Activated CD4-positive, alpha-beta T cell treated with anti-CD3 and anti-CD28 coated beads for 36 hours (primary cell): ENCODE measurements at regions of chr5 and their contacts with region 1.

Region 1: GRCh38 chr5:111278845-111279504 is 54.8 kb downstream of the CAMK4 start:
- DNase-seq: peak; percentile 93
- ATAC-seq: peak; percentile 97
- H3K4me3 Mint-ChIP-seq: no peak overlapping the region
- H3K27ac Mint-ChIP-seq: peak overlapping the region; percentile 79
- H3K4me1 Mint-ChIP-seq: peaks cover 69% of the 10 kb centered on the region
- H3K27me3 Mint-ChIP-seq: no peaks in the 10 kb centered on the region

Region 2: GRCh38 chr5:110757118-110757729 is 521.8 kb before region 1 on chr5:
- CTCF ChIA-PET with region 1: no interaction called
- POLR2A ChIA-PET with region 1: no interaction called
- intact Hi-C with region 1: loop called in 1 of 2 experiments (anchors 5 kb)
- DNase-seq: peak; percentile 17
- ATAC-seq: no peak
- H3K4me3 Mint-ChIP-seq: no peak overlapping the region
- H3K27ac Mint-ChIP-seq: no peak overlapping the region
- H3K4me1 Mint-ChIP-seq: peaks cover 27% of the 10 kb centered on the region
- H3K27me3 Mint-ChIP-seq: no peaks in the 10 kb centered on the region

Region 3: GRCh38 chr5:111169269-111169668 is 109.7 kb before region 1 on chr5:
- CTCF ChIA-PET with region 1: interaction called, 20 read pairs
- POLR2A ChIA-PET with region 1: no interaction called
- intact Hi-C with region 1: no loop called
- DNase-seq: no peak
- ATAC-seq: no peak
- H3K4me3 Mint-ChIP-seq: no peak overlapping the region
- H3K27ac Mint-ChIP-seq: no peak overlapping the region
- H3K4me1 Mint-ChIP-seq: peaks cover 5% of the 10 kb centered on the region
- H3K27me3 Mint-ChIP-seq: peaks cover 3% of the 10 kb centered on the region

Region 4: DNA sequence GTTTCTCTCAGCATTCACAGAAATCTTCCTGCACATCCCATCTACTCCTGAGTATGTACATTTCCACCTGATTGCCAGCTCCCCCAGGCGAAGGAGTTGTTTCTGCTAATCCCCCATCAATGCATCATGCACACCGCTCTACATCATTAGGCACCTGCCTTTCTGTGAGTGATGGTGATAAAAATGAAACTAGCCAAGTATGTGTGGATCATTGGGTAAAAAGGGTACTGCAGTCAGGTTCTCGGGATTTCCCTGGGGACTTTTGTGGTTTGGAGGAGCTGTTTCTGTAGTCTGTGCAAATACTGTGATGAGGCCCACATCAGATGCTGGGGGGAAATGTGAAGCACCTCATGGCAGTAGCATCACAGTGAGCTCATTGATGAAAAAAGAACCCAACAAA is 24.4 kb before region 1 on chr5:
- CTCF ChIA-PET with region 1: interaction called, 27 read pairs
- POLR2A ChIA-PET with region 1: no interaction called
- intact Hi-C with region 1: no loop called
- DNase-seq: peak; percentile 91
- ATAC-seq: peak; percentile 86
- H3K4me3 Mint-ChIP-seq: peak overlapping the region; percentile 63
- H3K27ac Mint-ChIP-seq: peak overlapping the region; percentile 95
- H3K4me1 Mint-ChIP-seq: peaks cover 91% of the 10 kb centered on the region
- H3K27me3 Mint-ChIP-seq: no peaks in the 10 kb centered on the region

Region 5: DNA sequence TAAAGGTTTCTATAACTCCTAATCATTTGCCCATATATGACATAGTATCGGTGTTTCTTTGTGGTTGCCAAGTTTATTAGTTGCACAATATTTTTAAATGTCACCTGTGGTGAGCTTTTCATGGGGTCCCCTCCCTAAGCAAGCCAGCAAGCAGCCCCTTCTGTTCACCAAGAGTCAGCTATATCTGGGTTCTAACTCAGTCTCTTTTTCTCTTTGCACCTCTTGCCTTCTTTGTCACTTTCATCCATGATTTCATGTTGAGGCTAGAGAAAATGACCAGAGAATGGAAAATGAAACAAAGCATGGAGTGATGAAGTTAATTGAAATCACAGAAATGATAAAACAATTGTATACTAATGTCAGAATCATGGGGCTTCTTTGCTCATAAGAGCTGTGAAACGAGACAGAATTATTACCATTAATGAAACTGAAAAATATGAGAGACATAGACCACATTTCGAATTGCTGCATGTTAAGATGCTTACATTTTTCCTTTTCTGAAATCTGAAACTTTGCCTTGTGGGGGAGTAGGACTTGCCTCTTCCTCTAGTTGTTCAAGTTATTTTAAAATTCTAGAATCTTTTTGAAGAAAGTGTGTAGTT is 21.0 kb after region 1 on chr5:
- CTCF ChIA-PET with region 1: interaction called, 16 read pairs
- POLR2A ChIA-PET with region 1: no interaction called
- intact Hi-C with region 1: no loop called
- DNase-seq: no peak
- ATAC-seq: peak; percentile 90
- H3K4me3 Mint-ChIP-seq: peak overlapping the region; percentile 54
- H3K27ac Mint-ChIP-seq: peak overlapping the region; percentile 94
- H3K4me1 Mint-ChIP-seq: peaks cover 45% of the 10 kb centered on the region
- H3K27me3 Mint-ChIP-seq: no peaks in the 10 kb centered on the region